Activated CD4-positive, alpha-beta T cell treated with anti-CD3 and anti-CD28 coated beads, Interleukin-2, amount 10 ng/mL, durations not matched to agents 24 days and 14 days (primary cell): ENCODE measurements at regions of chr7 and their contacts with region 1.

Region 1: GRCh38 chr7:151017953-151018420 is 6.3 kb downstream of the ATG9B start:
- DNase-seq: peak; percentile 95
- H3K4me3 Mint-ChIP-seq: peak overlapping the region; percentile 86
- H3K27ac Mint-ChIP-seq: peak overlapping the region; percentile 93
- H3K4me1 Mint-ChIP-seq: peaks cover 43% of the 10 kb centered on the region
- H3K27me3 Mint-ChIP-seq: peaks cover 27% of the 10 kb centered on the region

Region 2: DNA sequence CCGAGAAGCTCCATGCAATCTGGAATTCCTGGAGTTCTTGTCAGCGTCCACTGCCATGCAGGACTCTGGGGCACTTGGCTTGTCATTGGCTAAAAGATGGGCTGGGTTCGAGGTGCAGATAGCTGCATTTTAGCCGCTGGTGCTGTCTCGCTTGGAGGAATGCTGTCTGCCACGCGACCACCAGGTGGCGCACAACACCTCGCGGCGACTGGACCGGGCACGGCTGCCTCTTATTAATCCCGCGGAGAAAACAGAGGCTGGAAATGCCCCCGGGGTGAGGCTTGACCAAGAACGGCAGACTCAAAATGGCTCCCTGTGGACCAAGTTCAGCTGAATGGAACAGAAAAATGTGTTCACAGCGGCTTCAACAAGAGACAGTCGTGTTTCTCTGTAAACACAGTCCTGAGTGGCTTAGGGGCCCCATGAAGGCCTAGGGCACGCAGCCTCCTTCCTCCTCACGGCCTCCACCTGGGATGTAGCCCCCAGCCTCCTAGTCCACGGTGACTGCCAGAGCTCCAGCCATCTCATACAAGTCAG is 119.4 kb before region 1 on chr7:
- intact Hi-C with region 1: loop called (anchors 5 kb)
- DNase-seq: peak; percentile 93
- H3K4me3 Mint-ChIP-seq: no peak overlapping the region
- H3K27ac Mint-ChIP-seq: no peak overlapping the region
- H3K4me1 Mint-ChIP-seq: peaks cover 4% of the 10 kb centered on the region
- H3K27me3 Mint-ChIP-seq: peaks cover 56% of the 10 kb centered on the region

Region 3: DNA sequence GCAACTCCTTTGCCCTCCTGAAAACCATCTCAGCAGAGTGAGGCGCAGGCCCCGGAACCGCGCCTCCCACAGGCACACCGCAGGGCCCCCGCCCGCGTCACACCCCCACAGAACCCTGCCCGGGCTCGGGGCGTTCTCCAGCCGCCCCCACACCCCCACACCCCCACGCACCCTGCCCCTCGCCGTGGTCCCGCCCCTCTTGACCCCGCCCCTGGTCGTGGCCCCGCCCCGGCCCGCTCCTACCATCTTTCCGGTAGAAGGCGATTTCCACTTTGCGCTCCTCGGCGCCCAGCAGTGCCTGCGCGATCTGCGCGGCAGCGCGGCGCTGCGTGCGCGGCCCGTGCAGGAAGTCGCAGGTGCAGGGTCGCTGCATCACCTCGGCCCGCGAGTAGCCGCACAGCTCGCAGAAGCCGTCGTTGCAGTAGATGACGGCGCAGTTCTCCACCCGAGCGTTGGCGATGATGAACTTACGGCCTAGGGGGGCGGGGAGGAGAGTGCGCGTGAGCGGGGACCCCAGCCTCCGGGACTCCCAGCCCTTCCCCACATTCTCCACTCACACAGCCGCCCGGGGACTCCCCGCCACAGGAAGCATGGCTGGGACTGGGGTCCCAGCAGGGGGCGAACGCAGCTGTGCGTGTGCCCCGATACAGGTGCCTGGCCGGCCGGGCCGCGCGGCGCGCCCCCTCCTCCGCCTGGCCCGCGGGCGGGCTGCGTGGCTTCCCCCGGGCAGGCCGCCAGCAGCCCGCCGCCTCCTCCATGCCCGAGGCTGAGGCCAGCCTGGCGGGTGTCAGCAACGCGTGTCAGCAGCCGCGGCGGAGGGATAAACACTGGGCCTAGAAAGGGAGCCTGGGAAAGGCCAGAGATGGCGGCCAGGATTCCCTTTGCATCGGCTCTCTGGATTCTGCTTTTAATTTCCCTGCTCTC is 43.3 kb before region 1 on chr7:
- intact Hi-C with region 1: loop called (anchors 5 kb)
- DNase-seq: peak; percentile 93
- H3K4me3 Mint-ChIP-seq: peak overlapping the region; percentile 85
- H3K27ac Mint-ChIP-seq: peak overlapping the region; percentile 63
- H3K4me1 Mint-ChIP-seq: peaks cover 24% of the 10 kb centered on the region
- H3K27me3 Mint-ChIP-seq: peaks cover 29% of the 10 kb centered on the region

Region 4: GRCh38 chr7:150992833-150993302 is 25.1 kb before region 1 on chr7:
- intact Hi-C with region 1: no loop called
- DNase-seq: peak; percentile 76
- H3K4me3 Mint-ChIP-seq: no peak overlapping the region
- H3K27ac Mint-ChIP-seq: no peak overlapping the region
- H3K4me1 Mint-ChIP-seq: peaks cover 25% of the 10 kb centered on the region
- H3K27me3 Mint-ChIP-seq: peaks cover 4% of the 10 kb centered on the region

Region 5: DNA sequence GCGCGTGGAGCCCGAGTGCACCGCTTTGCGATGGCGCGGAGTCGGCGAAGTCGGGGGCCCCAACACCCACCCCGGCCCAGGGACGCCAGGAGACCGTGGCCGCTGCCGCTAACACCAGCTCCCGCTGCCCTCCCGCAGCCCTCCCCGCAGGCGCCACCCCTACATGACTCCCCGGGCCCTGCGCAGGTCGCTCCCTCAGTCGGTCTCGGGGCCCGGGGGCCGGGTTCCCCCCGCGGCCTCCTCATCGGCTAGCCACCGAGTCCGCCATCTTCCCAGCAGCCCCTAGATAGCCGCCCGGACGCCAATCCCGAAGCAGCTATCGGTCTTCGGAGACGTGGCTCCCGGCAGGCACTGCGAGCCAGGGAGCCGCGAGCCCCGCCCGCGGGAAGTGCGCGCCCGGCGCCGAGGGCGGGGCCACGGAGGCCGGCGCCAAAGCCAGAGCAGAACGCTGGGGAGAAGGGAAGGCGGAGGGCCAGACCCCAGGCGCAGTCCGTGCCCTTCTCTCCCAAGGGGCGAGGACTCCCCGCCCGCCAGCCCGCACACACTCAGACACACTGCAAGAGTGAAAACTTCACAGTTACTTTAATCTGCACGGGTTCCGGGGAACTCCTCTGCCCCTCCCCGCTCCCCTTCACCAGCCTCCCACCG is 62.7 kb after region 1 on chr7 and contains the start of gene FASTK:
- intact Hi-C with region 1: loop called (anchors 5 kb)
- DNase-seq: peak; percentile 97
- H3K4me3 Mint-ChIP-seq: peak within 1 kb of the TSS; percentile 95
- H3K27ac Mint-ChIP-seq: peak within 1 kb of the TSS; percentile 82
- H3K4me1 Mint-ChIP-seq: peaks cover 30% of the 10 kb centered on the region
- H3K27me3 Mint-ChIP-seq: peaks cover 9% of the 10 kb centered on the region
- total RNA-seq, gene FASTK: 90.8 and 92.3 TPM in 2 replicates

Region 6: GRCh38 chr7:151152643-151153513 is 134.9 kb after region 1 on chr7:
- intact Hi-C with region 1: no loop called
- DNase-seq: no peak
- H3K4me3 Mint-ChIP-seq: no peak overlapping the region
- H3K27ac Mint-ChIP-seq: no peak overlapping the region
- H3K4me1 Mint-ChIP-seq: no peaks in the 10 kb centered on the region
- H3K27me3 Mint-ChIP-seq: peaks cover 34% of the 10 kb centered on the region

Region 7: GRCh38 chr7:151244196-151244840 is 226.3 kb after region 1 on chr7:
- intact Hi-C with region 1: no loop called
- DNase-seq: peak; percentile 89
- H3K4me3 Mint-ChIP-seq: peak overlapping the region; percentile 70
- H3K27ac Mint-ChIP-seq: no peak overlapping the region
- H3K4me1 Mint-ChIP-seq: peaks cover 34% of the 10 kb centered on the region
- H3K27me3 Mint-ChIP-seq: peaks cover 32% of the 10 kb centered on the region